ENCODE measurements at regions of chr2 and their contacts with region 1.

Region 1: GRCh38 chr2:86221066-86221684 is 21.9 kb downstream of the MRPL35 start:
- DNase-seq: peak; percentile 21 to 51
- H3K4me3 ChIP-seq: no peak overlapping the region
- H3K27ac ChIP-seq: no peak overlapping the region
- H3K4me1 ChIP-seq: peaks cover 0 to 7% of the 10 kb centered on the region in 2 donors
- H3K27me3 ChIP-seq: no peaks in the 10 kb centered on the region
- CTCF ChIP-seq: peak; percentile 10 to 88 (median 69)
- POLR2A ChIP-seq: no peak

Region 2: GRCh38 chr2:86368161-86368824 is 147.1 kb after region 1 on chr2:
- intact Hi-C with region 1: loop called (anchors 10 kb)
- DNase-seq: peak; percentile 17 to 28
- H3K4me3 ChIP-seq: no peak overlapping the region
- H3K27ac ChIP-seq: no peak overlapping the region
- H3K4me1 ChIP-seq: no peaks in the 10 kb centered on the region
- H3K27me3 ChIP-seq: no peaks in the 10 kb centered on the region
- CTCF ChIP-seq: peak in 5 of 6 experiments; percentile 42 to 67 (median 64)
- POLR2A ChIP-seq: no peak